Aorta (tissue), 5 donors: ENCODE measurements at regions of chr12 and their contacts with region 1.

Region 1: DNA sequence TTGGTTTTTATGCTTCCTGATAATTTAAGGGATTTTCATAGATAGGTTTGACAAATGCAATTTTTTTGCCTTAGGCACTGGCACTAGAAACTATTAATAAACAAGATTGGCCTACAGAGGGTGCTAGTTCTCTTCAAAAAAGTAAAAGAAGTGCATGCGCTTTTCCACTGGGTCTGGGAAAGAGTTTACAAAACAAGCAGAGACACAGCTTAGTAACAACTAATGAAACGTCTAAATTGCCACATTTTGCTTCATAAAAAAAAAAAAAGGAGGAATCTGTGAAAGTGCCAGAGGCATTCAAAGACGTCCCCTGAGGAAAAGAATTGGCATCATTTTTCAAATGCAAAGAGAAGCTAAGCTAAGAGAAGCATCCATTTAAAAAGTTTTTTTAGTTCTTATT is 58.3 kb upstream of the EEA1 start:
- DNase-seq: no peak
- ATAC-seq: peak; percentile 89
- H3K4me3 ChIP-seq: no peak overlapping the region
- H3K27ac ChIP-seq: peak overlapping the region in 1 of 2 donors; percentile 7
- H3K4me1 ChIP-seq: no peaks in the 10 kb centered on the region
- H3K27me3 ChIP-seq: no peaks in the 10 kb centered on the region

Region 2: GRCh38 chr12:93419388-93420034 is 432.1 kb after region 1 on chr12:
- intact Hi-C with region 1: loop called (anchors 5 kb)
- DNase-seq: no peak
- ATAC-seq: peak; percentile 85
- H3K4me3 ChIP-seq: no peak overlapping the region
- H3K27ac ChIP-seq: no peak overlapping the region
- H3K4me1 ChIP-seq: peaks cover 3 to 5% of the 10 kb centered on the region in 2 donors
- H3K27me3 ChIP-seq: no peaks in the 10 kb centered on the region